ENCODE measurements at regions of chr10 and their contacts with region 1.

Region 1: DNA sequence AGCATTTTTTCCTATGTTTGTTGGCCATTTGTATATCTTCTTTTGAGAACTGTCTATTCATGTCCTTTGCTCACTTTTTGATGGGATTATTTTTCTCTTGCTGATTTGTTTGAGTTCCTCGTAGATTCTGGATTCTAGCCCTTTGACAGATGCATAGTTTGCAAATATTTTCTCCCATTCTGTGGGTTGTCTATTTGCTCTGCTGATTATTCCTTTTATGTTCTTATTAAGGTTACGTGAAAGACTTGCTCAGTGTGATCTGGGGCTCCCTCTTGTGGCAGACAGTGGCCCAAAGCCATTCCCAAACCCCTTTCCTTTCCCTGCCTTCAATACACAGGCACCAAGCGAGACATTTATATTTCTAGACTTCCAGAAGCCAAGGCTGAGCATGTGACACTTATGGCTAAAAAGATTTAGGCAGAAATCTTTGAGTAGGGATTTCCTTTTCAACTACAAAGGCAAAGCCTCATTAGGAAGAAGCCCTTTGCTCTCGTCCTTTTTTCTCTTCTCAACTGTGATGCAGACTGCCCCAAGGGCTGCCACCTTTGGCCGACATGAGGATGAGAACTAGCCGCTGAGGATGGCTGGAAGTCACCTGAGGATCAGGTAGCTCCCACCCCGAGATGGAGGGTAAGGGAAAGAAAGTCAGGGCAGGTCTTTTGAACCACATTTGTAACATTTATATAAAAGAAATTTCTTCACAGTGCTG is 23.6 kb downstream of the ST8SIA6 start:
- DNase-seq: peak; percentile 36
- H3K4me3 Mint-ChIP-seq: no peak overlapping the region
- H3K27ac Mint-ChIP-seq: no peak overlapping the region
- H3K4me1 Mint-ChIP-seq: peaks cover 56% of the 10 kb centered on the region
- H3K27me3 Mint-ChIP-seq: peaks cover 25% of the 10 kb centered on the region

Region 2: DNA sequence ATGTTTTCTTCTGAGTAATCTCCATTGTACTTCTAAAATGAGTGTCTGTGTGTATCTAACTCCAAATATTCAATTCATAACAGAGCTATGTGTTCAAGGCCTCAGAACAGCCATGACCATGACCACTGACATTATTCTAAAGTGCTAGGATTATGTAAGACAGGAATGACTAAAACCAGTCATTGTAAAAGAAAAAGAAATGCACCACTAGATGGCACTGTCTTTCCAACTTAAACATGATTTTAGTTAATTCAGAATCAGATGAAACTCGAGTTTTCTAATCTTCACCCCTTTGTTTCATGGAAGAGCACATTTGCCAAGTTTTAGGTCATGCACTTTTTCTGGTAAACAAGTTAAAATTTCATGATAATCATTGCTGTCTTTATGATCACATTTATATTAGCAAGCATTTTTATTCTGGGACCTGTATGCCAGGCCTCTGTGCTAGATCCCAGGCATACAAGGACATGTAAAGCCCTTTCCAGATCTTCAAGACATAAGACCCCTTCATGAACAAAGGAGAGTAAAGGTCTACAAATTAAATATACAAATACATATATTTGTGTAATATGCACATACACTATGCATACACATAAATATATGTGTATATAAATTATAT is 587.4 kb before region 1 on chr10:
- intact Hi-C with region 1: loop called (anchors 5 kb)
- DNase-seq: no peak
- H3K4me3 Mint-ChIP-seq: no peak overlapping the region
- H3K27ac Mint-ChIP-seq: no peak overlapping the region
- H3K4me1 Mint-ChIP-seq: peaks cover 2% of the 10 kb centered on the region
- H3K27me3 Mint-ChIP-seq: peaks cover 17% of the 10 kb centered on the region

Region 3: DNA sequence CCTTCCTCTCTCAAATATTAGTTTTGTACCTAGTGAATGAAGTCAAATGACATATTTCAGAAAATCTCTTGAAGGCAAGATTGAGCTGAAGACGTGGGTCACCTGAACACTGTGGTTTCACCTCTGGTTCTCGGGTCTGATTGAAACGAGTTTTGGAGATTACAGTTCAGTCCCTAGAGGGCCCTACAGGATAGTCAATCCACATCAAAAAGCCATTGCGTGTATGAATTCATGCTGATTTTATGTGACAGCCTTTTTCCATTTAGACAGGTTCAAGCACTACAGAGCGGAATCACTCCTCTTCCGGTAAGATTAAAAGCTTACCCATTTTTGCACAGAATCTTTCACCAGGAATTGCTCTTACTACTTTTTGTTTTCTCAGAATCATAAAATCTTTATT is 140.6 kb before region 1 on chr10:
- intact Hi-C with region 1: loop called (anchors 10 kb)
- DNase-seq: no peak
- H3K4me3 Mint-ChIP-seq: no peak overlapping the region
- H3K27ac Mint-ChIP-seq: no peak overlapping the region
- H3K4me1 Mint-ChIP-seq: peaks cover 5% of the 10 kb centered on the region
- H3K27me3 Mint-ChIP-seq: peaks cover 19% of the 10 kb centered on the region

Region 4: DNA sequence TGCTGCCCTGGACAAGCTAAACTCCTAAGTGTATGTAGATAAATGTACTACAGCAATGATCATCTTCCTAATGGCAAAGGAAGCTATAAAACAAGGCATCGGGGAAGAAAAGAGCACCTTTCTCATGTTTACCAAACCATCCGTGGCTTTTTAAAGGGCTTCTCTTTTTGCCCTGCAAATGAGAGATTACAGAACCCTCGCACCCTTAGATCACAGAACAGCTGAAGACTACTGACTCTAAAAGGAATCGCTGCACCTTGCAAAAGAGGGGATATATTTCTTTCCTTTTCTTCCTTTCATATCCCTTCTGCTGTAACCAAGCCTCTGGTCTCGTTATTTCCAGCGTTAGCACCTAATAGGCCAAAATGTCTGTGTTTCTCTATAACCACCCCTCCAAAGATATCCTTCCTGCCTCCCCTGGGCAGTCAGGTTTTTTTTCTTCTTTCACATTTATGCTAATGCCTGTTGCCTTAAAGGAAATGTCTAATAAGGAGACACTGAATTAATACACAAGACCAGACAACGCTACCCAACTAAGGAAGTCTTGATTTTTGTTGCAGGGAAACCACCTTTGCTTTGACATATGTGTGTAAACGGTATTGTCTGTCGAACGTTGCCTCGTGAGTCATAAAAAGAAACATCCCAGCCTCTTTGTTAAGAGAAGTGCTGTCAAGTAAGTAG is 13.0 kb after region 1 on chr10:
- intact Hi-C with region 1: loop called (anchors 2 kb)
- DNase-seq: no peak
- H3K4me3 Mint-ChIP-seq: peak overlapping the region; percentile 13
- H3K27ac Mint-ChIP-seq: no peak overlapping the region
- H3K4me1 Mint-ChIP-seq: peaks cover 24% of the 10 kb centered on the region
- H3K27me3 Mint-ChIP-seq: peaks cover 13% of the 10 kb centered on the region